ENCODE measurements at regions of chr15 and their contacts with region 1.

Region 1: DNA sequence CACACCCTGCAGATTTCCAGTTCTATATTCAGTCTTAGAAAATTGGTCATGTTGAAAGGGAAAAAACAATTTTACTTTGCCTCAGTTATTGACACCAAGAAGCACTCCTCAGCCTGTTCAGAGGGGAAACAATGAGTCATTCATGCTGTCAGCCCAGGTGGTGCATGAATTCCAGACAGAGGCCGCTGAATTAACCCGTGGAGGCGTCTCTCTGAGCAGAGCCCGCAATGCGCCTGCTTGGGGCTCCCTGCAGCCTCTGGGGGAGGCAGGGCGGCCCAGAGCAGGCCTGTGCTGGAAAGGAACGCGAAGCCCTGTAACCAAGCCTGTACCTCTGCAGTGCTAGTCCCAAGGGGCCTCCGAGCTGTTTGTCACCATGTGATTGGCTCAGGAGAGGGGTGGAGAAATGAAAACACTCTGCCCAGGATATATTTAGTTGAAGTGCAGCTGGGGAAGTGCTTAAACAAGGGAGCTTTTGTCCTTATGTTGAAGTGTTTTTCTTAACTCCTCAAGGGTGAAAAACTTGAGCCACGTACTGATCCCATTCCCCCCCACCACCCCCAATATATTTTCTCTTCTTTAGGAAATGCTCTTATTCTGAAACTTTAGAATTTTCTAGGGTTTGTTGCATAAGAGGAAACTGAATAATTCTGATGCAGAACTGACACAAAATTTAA is 68.3 kb upstream of the CHD2 start:
- DNase-seq: peak; percentile 94
- ATAC-seq: peak; percentile 96

Region 2: DNA sequence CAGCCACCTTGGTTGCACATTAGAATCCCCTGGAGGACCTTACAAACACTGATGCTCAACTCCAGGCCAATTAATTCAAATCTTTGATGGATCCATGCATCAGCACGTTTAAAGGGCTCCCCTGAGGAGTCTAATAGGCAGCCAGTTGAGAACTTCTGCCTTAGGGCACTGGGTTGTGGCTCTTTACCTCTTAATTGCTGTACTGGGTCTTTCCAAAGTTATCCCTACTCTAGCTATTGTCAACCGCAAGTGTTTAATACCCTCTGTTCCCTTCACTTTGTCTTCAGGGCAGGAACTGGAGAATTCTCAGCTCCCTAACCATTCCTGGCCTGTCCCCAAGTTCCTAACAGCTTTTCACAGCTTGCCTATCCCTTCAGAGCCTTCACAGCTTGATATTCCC is 161.2 kb before region 1 on chr15:
- intact Hi-C with region 1: no loop called
- DNase-seq: no peak
- ATAC-seq: no peak

Region 3: GRCh38 chr15:92903941-92904831 is 72.4 kb after region 1 on chr15:
- intact Hi-C with region 1: loop called (anchors 5 kb)
- DNase-seq: peak; percentile 99
- ATAC-seq: peak; percentile 91

Measured in Right ventricle myocardium superior (tissue), 1 donor.